ENCODE measurements at regions of chr2 and their contacts with region 1.

Region 1: DNA sequence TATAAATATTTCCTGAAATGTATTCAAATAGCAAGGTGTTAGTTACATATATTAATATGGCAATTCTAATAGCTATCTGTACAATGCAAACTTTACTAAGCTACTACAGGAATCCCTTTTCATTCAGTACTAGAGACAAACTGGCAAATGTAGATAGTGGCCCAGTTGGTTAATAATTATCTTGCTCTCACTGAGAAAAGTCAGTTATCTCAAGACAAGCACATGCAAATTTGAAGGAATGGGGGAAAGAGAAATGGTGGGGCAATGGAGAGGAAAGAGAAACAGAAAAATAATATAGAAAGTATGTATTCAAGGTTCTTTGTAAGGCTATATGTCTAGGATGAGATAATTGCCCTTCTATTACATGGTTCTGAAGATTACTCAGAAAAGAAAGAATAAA is 280.0 kb downstream of the FIGN start:
- DNase-seq: no peak
- ATAC-seq: no peak
- H3K4me3 ChIP-seq: no peak overlapping the region
- H3K27ac ChIP-seq: no peak overlapping the region
- H3K4me1 ChIP-seq: no peaks in the 10 kb centered on the region
- H3K27me3 ChIP-seq: no peaks in the 10 kb centered on the region
- CTCF ChIP-seq: no peak

Region 2: GRCh38 chr2:163475815-163476214 is 20.0 kb after region 1 on chr2:
- CTCF ChIA-PET with region 1: no interaction called
- POLR2A ChIA-PET with region 1: no interaction called
- in situ Hi-C with region 1: no loop called
- intact Hi-C with region 1: no loop called
- DNase-seq: no peak
- ATAC-seq: no peak
- H3K4me3 ChIP-seq: no peak overlapping the region
- H3K27ac ChIP-seq: no peak overlapping the region
- H3K4me1 ChIP-seq: no peaks in the 10 kb centered on the region
- H3K27me3 ChIP-seq: no peaks in the 10 kb centered on the region
- CTCF ChIP-seq: no peak

Region 3: GRCh38 chr2:163863046-163863445 is 407.2 kb after region 1 on chr2:
- CTCF ChIA-PET with region 1: no interaction called
- POLR2A ChIA-PET with region 1: interaction called, 14 read pairs
- in situ Hi-C with region 1: no loop called
- intact Hi-C with region 1: no loop called
- DNase-seq: no peak
- ATAC-seq: peak; percentile 75
- H3K4me3 ChIP-seq: no peak overlapping the region
- H3K27ac ChIP-seq: peak overlapping the region; percentile 35; the same call in 1 of the 2 replicates
- H3K4me1 ChIP-seq: no peaks in the 10 kb centered on the region
- H3K27me3 ChIP-seq: no peaks in the 10 kb centered on the region
- CTCF ChIP-seq: no peak